SK-N-SH (cell line): ENCODE measurements at regions of chr2 and their contacts with region 1.

Region 1: DNA sequence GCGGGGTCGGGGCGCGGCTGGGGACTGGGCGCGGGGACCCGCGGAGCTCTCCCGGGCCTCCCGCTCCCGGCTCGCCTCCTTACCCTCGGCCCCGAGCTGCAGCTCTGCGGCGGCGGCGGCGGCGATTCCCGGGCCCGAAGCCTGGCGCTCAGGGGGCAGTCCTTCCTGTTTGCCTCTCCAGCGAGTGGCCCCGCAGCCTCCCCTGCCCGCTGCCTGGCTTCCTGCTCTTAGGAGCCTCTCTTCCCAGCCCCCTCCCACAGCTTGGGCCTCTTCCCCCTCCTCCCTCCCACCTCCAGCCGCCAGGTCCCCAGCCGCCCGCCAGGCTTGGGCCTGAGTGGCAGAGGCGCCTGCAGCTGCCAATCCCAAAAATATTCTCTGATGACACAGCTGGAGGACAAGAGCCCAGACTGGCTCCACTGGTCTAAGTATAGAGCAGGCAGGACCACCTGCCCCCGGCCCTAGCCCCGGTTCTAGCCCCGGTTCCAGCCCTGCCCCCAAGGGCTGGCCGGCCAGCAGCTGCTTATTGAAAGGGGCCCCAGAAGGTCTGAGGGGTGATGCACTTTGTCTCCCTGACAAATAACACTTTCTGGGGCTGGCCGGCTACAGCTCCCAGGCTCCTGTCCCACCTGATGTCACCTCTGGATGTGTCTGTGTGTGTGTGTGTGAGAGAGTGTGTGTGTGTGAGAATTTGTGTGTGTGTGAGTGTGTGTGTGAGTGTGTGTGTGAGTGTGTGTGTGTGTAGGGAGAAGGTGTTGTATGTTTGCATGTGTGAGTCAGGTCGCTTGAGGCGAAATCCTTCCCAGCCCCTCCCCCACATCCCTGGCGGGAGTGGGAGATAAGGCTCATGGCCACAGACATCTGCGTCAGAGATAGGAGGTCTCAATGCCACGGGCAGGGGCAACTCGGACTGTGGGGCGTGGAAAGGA is at the start of gene OBSL1:
- DNase-seq: peak; percentile 97
- H3K4me3 ChIP-seq: peak within 1 kb of the TSS; percentile 65 to 82
- H3K27ac ChIP-seq: peak within 1 kb of the TSS; percentile 36 to 76
- H3K4me1 ChIP-seq: peaks cover 3 to 21% of the 10 kb centered on the region in 2 experiments; a peak in 1 of 4 replicates
- H3K27me3 ChIP-seq: no peaks in the 10 kb centered on the region
- CTCF ChIP-seq: no peak
- EP300 ChIP-seq: peak in 1 of 2 experiments; percentile 55; a peak in 1 of 4 replicates
- RAD21 ChIP-seq: no peak; the same call in 1 of the 2 replicates
- polyA plus RNA-seq, gene OBSL1: 70.9 and 93.0 TPM in 2 replicates

Region 2: GRCh38 chr2:219552382-219553167 is 19.0 kb before region 1 on chr2:
- CTCF ChIA-PET with region 1: interaction called, 9 read pairs
- POLR2A ChIA-PET with region 1: interaction called, 25 read pairs
- DNase-seq: peak; percentile 96
- H3K4me3 ChIP-seq: peak overlapping the region; percentile 67 to 74
- H3K27ac ChIP-seq: peak overlapping the region; percentile 36 to 80; a peak in 3 of 4 replicates
- H3K4me1 ChIP-seq: peaks cover 0 to 27% of the 10 kb centered on the region in 2 experiments; a peak in 1 of 4 replicates
- H3K27me3 ChIP-seq: no peaks in the 10 kb centered on the region
- CTCF ChIP-seq: no peak
- EP300 ChIP-seq: no peak
- RAD21 ChIP-seq: no peak

Region 3: DNA sequence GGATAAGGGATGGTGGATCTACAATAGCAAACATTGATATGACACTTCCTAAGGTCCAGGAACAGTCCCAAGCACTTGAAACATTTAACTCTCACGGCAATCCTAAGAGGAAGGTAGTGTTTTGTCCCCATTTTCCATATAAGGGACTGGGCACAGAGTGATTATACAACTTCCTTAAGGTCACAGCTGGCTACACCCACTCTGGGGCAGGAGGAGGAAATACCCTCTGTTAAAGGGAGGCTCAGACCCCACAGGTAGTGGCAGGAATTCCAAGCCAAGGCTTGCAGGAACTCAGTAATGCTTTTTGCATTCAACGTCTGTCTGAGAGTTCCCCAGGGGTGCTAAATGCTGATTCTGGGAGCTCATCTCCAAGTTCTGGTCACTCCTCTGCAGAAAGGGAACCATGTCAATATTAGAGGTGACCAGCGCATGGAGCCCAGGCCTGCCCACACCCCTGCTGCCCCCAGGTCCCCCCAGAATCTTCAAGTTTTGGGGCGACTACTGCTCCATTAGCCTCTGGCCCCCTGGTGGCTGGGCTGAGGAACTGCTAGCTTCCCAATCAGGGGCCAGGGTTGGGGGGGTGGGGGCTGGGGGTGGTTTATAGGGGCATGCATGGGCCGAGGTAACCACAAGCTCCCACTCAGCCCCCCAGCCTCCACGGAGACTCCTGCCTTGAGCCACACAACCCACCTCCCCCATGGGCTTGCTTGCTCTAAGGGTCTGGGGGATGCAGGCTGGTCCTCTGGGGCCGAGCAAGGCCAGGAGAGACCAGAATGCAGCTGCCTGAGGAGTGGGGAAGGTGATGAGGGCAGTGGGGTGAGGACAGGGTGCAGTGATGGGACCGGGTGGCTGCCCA is 11.3 kb before region 1 on chr2:
- CTCF ChIA-PET with region 1: interaction called, 48 read pairs
- POLR2A ChIA-PET with region 1: interaction called, 10 read pairs
- DNase-seq: peak; percentile 90
- H3K4me3 ChIP-seq: no peak overlapping the region
- H3K27ac ChIP-seq: no peak overlapping the region
- H3K4me1 ChIP-seq: peaks cover 0 to 10% of the 10 kb centered on the region in 2 experiments; a peak in 1 of 4 replicates
- H3K27me3 ChIP-seq: no peaks in the 10 kb centered on the region
- CTCF ChIP-seq: peak; percentile 70
- EP300 ChIP-seq: no peak
- RAD21 ChIP-seq: no peak

Region 4: GRCh38 chr2:219609149-219609750 is 37.7 kb after region 1 on chr2:
- CTCF ChIA-PET with region 1: no interaction called
- POLR2A ChIA-PET with region 1: no interaction called
- DNase-seq: no peak
- H3K4me3 ChIP-seq: no peak overlapping the region
- H3K27ac ChIP-seq: no peak overlapping the region
- H3K4me1 ChIP-seq: peaks cover 0 to 9% of the 10 kb centered on the region in 2 experiments; a peak in 1 of 4 replicates
- H3K27me3 ChIP-seq: no peaks in the 10 kb centered on the region
- CTCF ChIP-seq: no peak
- EP300 ChIP-seq: no peak
- RAD21 ChIP-seq: no peak